Psoas muscle (tissue), 8 donors: ENCODE measurements at regions of chr6 and their contacts with region 1.

Region 1: DNA sequence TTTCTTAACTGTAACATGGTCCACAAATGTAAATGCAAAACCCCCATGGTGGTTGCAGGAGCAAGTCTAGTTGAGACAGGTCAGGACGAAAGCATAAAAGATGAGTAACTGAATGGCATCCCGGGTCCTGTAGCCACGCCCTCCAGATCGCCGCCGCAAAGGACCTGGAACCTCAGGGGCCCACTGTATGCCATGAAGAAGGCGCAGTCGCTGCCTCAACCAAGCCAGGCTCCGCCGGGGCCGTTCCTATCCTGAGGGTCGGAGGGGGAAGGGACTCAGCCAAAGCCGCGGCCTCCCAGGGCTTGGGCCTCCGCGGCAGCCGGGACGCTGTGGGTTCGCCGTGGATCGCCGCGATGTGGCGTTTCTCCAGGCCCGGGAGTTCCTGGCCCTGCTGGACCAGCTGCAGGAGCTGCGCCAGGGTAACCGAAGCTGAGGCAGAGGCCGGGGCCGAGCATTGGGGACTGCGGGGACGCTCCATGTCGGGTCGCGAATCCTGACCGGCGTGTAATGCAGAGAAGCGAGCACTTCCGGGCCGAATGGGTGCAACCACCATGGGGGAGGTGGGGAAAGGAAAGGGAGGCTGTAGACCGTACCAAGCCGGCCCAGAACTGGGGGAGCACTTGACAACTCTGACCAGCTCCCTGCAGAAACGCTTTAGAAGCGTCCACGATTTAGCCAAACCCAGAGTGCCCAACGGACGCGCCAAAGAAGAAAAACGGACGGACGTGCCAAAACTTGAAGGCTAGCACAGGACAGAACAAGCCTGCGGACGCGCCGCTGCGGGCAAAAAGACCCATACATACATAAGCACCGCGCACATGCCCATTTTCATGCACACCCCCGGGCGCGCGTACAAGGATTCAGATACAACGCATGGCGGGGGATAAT is 11.1 kb downstream of the RPL7L1 start:
- DNase-seq: peak; percentile 95 to 97
- ATAC-seq: peak; percentile 96 to 98 (median 97)
- H3K4me3 ChIP-seq: peak overlapping the region; percentile 82
- H3K27ac ChIP-seq: peak overlapping the region; percentile 97
- H3K4me1 ChIP-seq: peaks cover 20% of the 10 kb centered on the region
- H3K27me3 ChIP-seq: no peaks in the 10 kb centered on the region
- CTCF ChIP-seq: no peak

Region 2: GRCh38 chr6:42269553-42269952 is 621.0 kb before region 1 on chr6:
- intact Hi-C with region 1: no loop called
- DNase-seq: no peak
- ATAC-seq: no peak
- H3K4me3 ChIP-seq: no peak overlapping the region
- H3K27ac ChIP-seq: no peak overlapping the region
- H3K4me1 ChIP-seq: no peaks in the 10 kb centered on the region
- H3K27me3 ChIP-seq: no peaks in the 10 kb centered on the region
- CTCF ChIP-seq: no peak

Region 3: DNA sequence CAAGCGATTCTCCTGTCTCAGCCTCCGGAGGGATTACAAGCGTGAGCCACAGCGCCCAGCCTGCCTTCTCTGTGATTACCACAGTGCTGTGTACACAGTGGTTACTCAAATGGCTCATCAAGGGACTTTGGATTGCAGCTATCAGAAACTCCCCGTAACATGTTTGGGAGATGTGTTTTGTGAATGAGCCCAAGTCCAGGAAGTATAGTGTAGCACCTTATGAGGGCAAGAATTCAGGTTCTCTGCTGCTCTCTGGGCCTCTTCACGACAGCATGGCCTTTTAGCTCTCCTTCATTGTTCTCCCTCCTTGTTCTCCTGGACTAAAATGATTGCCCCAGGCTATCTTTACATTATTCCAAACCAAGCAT is 45.2 kb before region 1 on chr6:
- intact Hi-C with region 1: no loop called
- DNase-seq: no peak
- ATAC-seq: peak in 3 of 4 donors; percentile 30 to 48 (median 47)
- H3K4me3 ChIP-seq: no peak overlapping the region
- H3K27ac ChIP-seq: peak overlapping the region; percentile 85
- H3K4me1 ChIP-seq: peaks cover 3% of the 10 kb centered on the region
- H3K27me3 ChIP-seq: no peaks in the 10 kb centered on the region
- CTCF ChIP-seq: no peak

Region 4: GRCh38 chr6:43516697-43517504 is 626.3 kb after region 1 on chr6 and contains the starts of genes POLR1C and YIPF3:
- intact Hi-C with region 1: loop called in 1 of 2 experiments (anchors 10 kb)
- DNase-seq: peak; percentile 96 to 98
- ATAC-seq: peak; percentile 95 to 98 (median 97)
- H3K4me3 ChIP-seq: peak within 1 kb of the TSS; percentile 94
- H3K27ac ChIP-seq: peak within 1 kb of the TSS; percentile 94
- H3K4me1 ChIP-seq: peaks cover 34% of the 10 kb centered on the region
- H3K27me3 ChIP-seq: no peaks in the 10 kb centered on the region
- CTCF ChIP-seq: no peak
- total RNA-seq, gene POLR1C: 17.5 to 27.8 (median 24.1) TPM
- total RNA-seq, gene YIPF3: 57.9 to 71.4 (median 63.0) TPM